Activated CD8-positive, alpha-beta T cell treated with anti-CD3 and anti-CD28 coated beads for 36 hours (primary cell): ENCODE measurements at regions of chr6 and their contacts with region 1.

Region 1: GRCh38 chr6:52577022-52577777 is at the start of gene TRAM2:
- DNase-seq: peak; percentile 61
- ATAC-seq: peak; percentile 60
- H3K4me3 Mint-ChIP-seq: peak within 1 kb of the TSS; percentile 78
- H3K27ac Mint-ChIP-seq: peak within 1 kb of the TSS; percentile 73
- H3K4me1 Mint-ChIP-seq: peaks cover 31% of the 10 kb centered on the region
- H3K27me3 Mint-ChIP-seq: no peaks in the 10 kb centered on the region
- CTCF ChIP-seq: no peak
- total RNA-seq, gene TRAM2: 0.94 to 1.0 TPM

Region 2: DNA sequence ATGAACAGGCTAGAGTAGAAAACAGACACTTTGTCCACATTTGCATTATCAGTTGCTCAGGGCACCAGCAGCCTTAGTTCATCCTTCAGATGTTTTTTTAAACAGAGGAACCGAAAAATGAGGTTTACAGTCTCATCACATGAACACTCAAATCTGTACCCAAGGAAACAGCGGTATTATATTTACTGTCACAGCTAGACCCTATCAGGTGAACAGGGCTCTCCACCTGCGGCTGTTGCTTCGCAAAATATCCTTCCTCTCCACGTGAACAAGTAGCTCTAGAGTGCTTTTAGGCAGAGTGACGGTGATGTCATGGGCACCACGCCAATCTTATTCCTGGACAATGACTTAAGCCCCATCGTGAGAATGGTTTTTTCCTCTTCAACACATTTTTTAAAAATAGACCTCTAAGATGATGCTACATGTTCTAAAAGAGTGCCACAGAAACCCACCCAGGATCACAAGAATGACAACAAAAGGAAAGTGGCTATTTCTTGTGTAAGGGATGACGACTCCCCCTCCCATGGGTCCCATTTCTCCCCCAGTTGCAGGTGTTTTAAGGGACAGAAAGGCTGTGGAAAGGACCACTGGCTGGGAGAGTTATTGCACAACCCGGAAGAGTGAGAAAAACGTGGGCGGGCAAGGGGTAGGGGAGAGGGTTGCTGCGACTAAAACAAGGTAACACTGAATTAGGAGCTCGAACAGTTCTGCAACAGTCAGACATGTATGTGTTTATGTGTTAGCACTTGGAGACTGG is 79.4 kb before region 1 on chr6:
- CTCF ChIA-PET with region 1: no interaction called
- POLR2A ChIA-PET with region 1: no interaction called
- intact Hi-C with region 1: no loop called
- DNase-seq: no peak
- ATAC-seq: no peak
- H3K4me3 Mint-ChIP-seq: no peak overlapping the region
- H3K27ac Mint-ChIP-seq: no peak overlapping the region
- H3K4me1 Mint-ChIP-seq: peaks cover 2% of the 10 kb centered on the region
- H3K27me3 Mint-ChIP-seq: no peaks in the 10 kb centered on the region
- CTCF ChIP-seq: no peak

Region 3: GRCh38 chr6:52537001-52537753 is 40.0 kb before region 1 on chr6:
- CTCF ChIA-PET with region 1: interaction called, 5 read pairs
- POLR2A ChIA-PET with region 1: interaction called, 4 read pairs
- intact Hi-C with region 1: loop called (anchors 5 kb)
- DNase-seq: peak; percentile 34
- ATAC-seq: peak; percentile 37
- H3K4me3 Mint-ChIP-seq: no peak overlapping the region
- H3K27ac Mint-ChIP-seq: peak overlapping the region; percentile 29
- H3K4me1 Mint-ChIP-seq: peaks cover 37% of the 10 kb centered on the region
- H3K27me3 Mint-ChIP-seq: no peaks in the 10 kb centered on the region
- CTCF ChIP-seq: no peak

Region 4: DNA sequence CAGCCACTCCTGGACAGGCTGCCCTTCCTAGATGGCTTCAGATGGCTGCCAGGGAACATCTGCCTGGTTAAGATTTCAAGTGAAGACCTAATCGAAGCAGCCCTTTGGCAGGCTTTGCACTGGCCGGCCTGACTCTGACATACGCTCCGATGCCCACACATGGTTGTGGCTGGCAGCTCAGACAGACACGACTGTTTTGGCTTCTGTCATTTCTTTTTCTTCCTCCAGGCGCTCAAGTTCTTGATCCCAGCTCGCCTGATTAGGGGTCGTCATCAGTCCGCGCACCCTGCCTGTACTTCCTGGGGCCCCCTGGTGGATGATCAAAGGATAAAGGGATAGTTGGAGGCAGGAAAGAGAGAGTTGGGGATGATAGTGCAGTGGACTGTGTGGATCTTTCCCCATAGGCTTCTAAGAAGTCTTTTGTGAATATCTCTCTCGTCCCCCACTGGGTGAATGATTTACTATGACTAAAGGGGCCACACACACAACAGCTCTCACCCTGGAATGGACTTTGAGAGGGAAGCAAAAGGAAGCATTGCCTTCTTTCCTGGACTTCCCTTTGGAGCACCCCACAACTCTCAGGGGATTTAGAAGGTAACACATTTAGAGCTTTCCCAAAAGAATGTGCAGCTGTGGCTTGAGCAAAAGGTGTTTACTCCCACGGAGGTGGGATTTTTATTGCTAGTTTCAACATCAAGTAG is 21.1 kb after region 1 on chr6:
- CTCF ChIA-PET with region 1: interaction called, 46 read pairs
- POLR2A ChIA-PET with region 1: no interaction called
- intact Hi-C with region 1: no loop called
- DNase-seq: peak; percentile 64
- ATAC-seq: peak; percentile 76
- H3K4me3 Mint-ChIP-seq: no peak overlapping the region
- H3K27ac Mint-ChIP-seq: no peak overlapping the region
- H3K4me1 Mint-ChIP-seq: peaks cover 7% of the 10 kb centered on the region
- H3K27me3 Mint-ChIP-seq: no peaks in the 10 kb centered on the region
- CTCF ChIP-seq: peak; percentile 70